Right cardiac atrium (tissue), 5 donors: ENCODE measurements at regions of chr13 and their contacts with region 1.

Region 1: GRCh38 chr13:34076943-34077703 is 259.2 kb downstream of the RFC3 start:
- DNase-seq: no peak
- ATAC-seq: peak in 1 of 2 donors; percentile 50
- H3K4me3 ChIP-seq: no peak overlapping the region
- H3K27ac ChIP-seq: no peak overlapping the region
- H3K4me1 ChIP-seq: peaks cover 3% of the 10 kb centered on the region
- H3K27me3 ChIP-seq: no peaks in the 10 kb centered on the region

Region 2: DNA sequence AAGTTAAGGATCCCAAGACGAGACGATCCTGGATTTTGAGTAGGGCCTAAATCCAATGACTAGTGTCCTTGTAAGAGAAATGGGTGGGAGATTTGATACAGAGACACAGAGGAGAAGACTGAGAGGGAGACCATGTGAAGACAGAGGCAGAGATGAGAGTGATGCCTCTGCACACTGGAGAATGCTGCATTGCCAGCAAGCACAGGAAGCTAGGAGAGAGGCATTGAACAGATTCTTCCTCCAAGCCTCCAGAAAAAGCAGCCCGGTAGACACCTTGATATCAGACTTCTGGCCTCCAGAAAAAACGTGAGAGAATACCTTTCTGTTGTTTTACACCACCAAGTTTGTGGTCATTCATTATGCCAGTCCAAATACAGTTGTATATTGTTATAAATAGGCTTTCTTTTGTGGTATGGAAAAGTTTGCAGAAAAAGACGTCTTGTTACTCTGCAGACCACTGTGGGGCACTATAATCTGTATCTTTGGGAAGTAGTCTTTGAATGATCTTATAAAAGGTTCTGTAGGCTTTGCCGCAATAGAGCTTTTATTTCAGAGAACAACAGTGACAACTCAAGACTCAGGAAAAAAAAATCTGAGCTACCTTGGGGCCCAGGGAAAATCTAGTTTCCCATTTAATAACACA is 277.1 kb before region 1 on chr13:
- intact Hi-C with region 1: loop called in 1 of 4 experiments (anchors 10 kb)
- DNase-seq: no peak
- ATAC-seq: peak; percentile 35 to 38
- H3K4me3 ChIP-seq: no peak overlapping the region
- H3K27ac ChIP-seq: no peak overlapping the region
- H3K4me1 ChIP-seq: no peaks in the 10 kb centered on the region
- H3K27me3 ChIP-seq: no peaks in the 10 kb centered on the region

Region 3: GRCh38 chr13:35157143-35157755 is 1080.1 kb after region 1 on chr13:
- intact Hi-C with region 1: loop called in 1 of 4 experiments (anchors 10 kb)
- DNase-seq: no peak
- ATAC-seq: peak in 1 of 2 donors; percentile 66
- H3K4me3 ChIP-seq: no peak overlapping the region
- H3K27ac ChIP-seq: no peak overlapping the region
- H3K4me1 ChIP-seq: no peaks in the 10 kb centered on the region
- H3K27me3 ChIP-seq: no peaks in the 10 kb centered on the region